HCT116 (cell line): ENCODE measurements at regions of chr1 and their contacts with region 1.

Region 1: GRCh38 chr1:34763142-34763781 is 3.7 kb downstream of the GJB4 start:
- DNase-seq: peak; percentile 94
- ATAC-seq: peak; percentile 82
- H3K4me3 ChIP-seq: peak overlapping the region; percentile 25 to 54
- H3K27ac ChIP-seq: peak overlapping the region; percentile 87
- H3K4me1 ChIP-seq: peaks cover 43 to 61% of the 10 kb centered on the region in 2 experiments
- H3K27me3 ChIP-seq: no peaks in the 10 kb centered on the region
- CTCF ChIP-seq: no peak
- POLR2A ChIP-seq: no peak
- RAD21 ChIP-seq: no peak

Region 2: GRCh38 chr1:34726861-34727260 is 36.4 kb before region 1 on chr1:
- CTCF ChIA-PET with region 1: no interaction called
- POLR2A ChIA-PET with region 1: no interaction called
- RAD21 ChIA-PET with region 1: no interaction called
- intact Hi-C with region 1: no loop called
- DNase-seq: no peak
- ATAC-seq: no peak
- H3K4me3 ChIP-seq: no peak overlapping the region
- H3K27ac ChIP-seq: no peak overlapping the region
- H3K4me1 ChIP-seq: no peaks in the 10 kb centered on the region
- H3K27me3 ChIP-seq: peaks cover 43% of the 10 kb centered on the region
- CTCF ChIP-seq: no peak
- POLR2A ChIP-seq: no peak
- RAD21 ChIP-seq: no peak

Region 3: DNA sequence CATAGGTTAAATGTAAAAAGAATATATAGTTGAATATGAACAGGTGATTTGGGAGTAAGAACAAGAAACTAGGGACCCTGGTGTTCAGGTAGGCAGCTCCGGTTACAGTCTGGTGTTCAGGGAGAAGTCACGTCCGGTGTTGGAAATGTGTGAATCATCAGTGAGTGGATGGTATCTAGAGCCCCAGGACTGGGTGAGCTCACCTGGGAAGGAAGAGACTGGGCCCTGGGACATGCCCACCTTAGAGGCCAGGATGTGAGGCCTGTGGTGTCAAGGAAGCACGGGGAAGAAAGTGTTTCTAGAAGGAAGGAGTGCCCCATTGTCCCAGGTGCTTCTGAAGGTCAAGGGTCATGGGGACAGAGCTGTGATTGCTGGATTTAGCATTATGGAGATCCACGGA is 16.3 kb after region 1 on chr1:
- CTCF ChIA-PET with region 1: interaction called, 3 read pairs
- POLR2A ChIA-PET with region 1: interaction called, 6 read pairs
- RAD21 ChIA-PET with region 1: no interaction called
- intact Hi-C with region 1: loop called (anchors 2 kb)
- DNase-seq: peak; percentile 77
- ATAC-seq: peak; percentile 57
- H3K4me3 ChIP-seq: no peak overlapping the region
- H3K27ac ChIP-seq: peak overlapping the region; percentile 98
- H3K4me1 ChIP-seq: peaks cover 39 to 59% of the 10 kb centered on the region in 2 experiments
- H3K27me3 ChIP-seq: no peaks in the 10 kb centered on the region
- CTCF ChIP-seq: no peak
- POLR2A ChIP-seq: no peak
- RAD21 ChIP-seq: no peak

Region 4: GRCh38 chr1:36023098-36023769 is 1260.0 kb after region 1 on chr1:
- CTCF ChIA-PET with region 1: no interaction called
- POLR2A ChIA-PET with region 1: no interaction called
- RAD21 ChIA-PET with region 1: no interaction called
- intact Hi-C with region 1: no loop called
- DNase-seq: no peak
- ATAC-seq: no peak
- H3K4me3 ChIP-seq: no peak overlapping the region
- H3K27ac ChIP-seq: no peak overlapping the region
- H3K4me1 ChIP-seq: no peaks in the 10 kb centered on the region
- H3K27me3 ChIP-seq: no peaks in the 10 kb centered on the region
- CTCF ChIP-seq: no peak
- POLR2A ChIP-seq: no peak
- RAD21 ChIP-seq: no peak